Activated CD4-positive, alpha-beta memory T cell treated with anti-CD3 and anti-CD28 coated beads for 36 hours (primary cell): ENCODE measurements at regions of chr6 and their contacts with region 1.

Region 1: DNA sequence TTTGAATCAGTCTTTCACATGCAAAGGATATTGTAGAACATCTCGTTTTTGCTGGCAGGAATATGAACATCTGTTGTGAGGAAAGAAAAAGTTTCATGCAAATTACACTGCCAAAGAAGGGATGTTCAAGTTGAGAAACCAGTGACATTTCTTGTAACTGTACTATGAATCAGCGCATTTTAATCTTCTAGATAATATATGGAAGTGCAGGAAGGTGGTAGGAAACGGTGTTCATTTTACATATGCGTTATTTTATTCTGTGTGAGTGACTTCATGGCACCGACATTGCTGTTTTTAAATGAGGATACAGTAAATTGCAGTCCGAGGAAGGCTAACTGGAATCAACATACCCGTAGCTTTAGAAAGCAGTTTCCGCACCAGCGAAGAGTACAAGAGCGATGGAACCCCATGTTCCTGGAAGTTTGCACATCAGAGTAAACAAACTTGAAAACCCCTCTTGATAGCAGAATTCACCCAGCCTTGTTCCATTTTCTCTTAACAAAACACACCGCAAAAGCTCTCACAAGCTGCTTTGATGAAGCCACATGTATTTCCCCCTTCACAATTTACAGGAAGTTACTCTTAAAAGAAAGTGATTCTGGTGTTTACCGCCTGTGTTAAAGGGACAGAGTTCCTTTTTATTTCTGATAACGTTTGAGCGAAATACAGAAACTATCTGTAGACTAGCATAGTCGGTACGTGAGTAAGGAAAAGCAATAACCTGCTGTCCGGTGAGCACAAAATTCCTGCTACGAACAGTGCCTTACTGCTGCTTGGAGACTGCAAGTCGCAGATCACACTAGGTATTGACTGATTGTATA is 11.5 kb downstream of the PRDM1 start:
- DNase-seq: peak; percentile 69
- H3K4me3 Mint-ChIP-seq: peak overlapping the region; percentile 91
- H3K27ac Mint-ChIP-seq: peak overlapping the region; percentile 96
- H3K4me1 Mint-ChIP-seq: peaks cover 77% of the 10 kb centered on the region
- H3K27me3 Mint-ChIP-seq: peaks cover 2% of the 10 kb centered on the region

Region 2: DNA sequence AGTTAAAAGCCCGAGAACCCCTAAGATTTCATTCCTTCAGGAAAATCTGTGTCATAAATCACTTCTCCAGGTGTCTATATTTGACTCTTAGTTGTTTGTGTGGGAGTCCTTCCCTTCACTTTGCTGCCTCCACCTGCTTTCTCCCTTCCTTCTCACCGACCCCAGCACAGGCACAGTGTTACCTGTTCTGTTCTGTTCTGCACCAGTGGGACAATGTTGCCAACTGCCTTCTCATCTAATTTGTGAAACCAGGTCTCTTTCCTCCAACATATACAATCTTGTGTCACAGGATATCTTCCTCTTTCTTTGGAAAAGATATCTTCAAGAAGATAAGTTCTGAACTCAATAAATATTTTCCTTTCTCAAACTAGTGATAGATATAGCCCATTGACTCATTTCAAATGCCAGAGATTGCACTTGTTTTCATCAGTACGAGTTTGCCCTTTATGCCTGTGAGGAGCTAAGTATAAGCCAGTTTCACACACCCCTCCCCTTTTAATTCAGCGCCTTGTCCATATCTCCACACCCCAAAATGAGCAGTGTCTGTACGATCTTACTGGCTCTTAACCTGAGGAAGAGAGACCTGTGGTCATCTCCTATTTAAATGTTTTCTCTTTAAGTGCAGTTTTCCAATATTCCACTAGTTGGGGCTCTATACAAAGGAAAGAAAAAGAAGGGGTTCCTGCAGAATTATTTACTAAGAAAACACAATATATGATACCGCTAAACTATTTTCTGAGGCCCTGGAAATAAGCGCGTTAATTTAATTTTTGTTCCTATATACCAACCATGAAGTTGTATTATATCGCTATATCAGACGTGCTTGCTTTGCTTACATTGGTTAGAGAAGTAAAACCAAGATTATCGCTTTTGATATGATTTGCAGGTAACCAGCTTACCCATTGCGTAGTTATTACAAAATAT is 613.1 kb before region 1 on chr6:
- CTCF ChIA-PET with region 1: no interaction called
- POLR2A ChIA-PET with region 1: interaction called, 3 read pairs
- intact Hi-C with region 1: loop called (anchors 5 kb)
- DNase-seq: no peak
- H3K4me3 Mint-ChIP-seq: peak overlapping the region; percentile 2
- H3K27ac Mint-ChIP-seq: peak overlapping the region; percentile 30
- H3K4me1 Mint-ChIP-seq: peaks cover 32% of the 10 kb centered on the region
- H3K27me3 Mint-ChIP-seq: peaks cover 7% of the 10 kb centered on the region

Region 3: GRCh38 chr6:105810105-105810921 is 287.3 kb before region 1 on chr6:
- CTCF ChIA-PET with region 1: no interaction called
- POLR2A ChIA-PET with region 1: interaction called, 4 read pairs
- intact Hi-C with region 1: loop called (anchors 1 kb)
- DNase-seq: peak; percentile 82
- H3K4me3 Mint-ChIP-seq: no peak overlapping the region
- H3K27ac Mint-ChIP-seq: peak overlapping the region; percentile 53
- H3K4me1 Mint-ChIP-seq: peaks cover 42% of the 10 kb centered on the region
- H3K27me3 Mint-ChIP-seq: peaks cover 10% of the 10 kb centered on the region

Region 4: DNA sequence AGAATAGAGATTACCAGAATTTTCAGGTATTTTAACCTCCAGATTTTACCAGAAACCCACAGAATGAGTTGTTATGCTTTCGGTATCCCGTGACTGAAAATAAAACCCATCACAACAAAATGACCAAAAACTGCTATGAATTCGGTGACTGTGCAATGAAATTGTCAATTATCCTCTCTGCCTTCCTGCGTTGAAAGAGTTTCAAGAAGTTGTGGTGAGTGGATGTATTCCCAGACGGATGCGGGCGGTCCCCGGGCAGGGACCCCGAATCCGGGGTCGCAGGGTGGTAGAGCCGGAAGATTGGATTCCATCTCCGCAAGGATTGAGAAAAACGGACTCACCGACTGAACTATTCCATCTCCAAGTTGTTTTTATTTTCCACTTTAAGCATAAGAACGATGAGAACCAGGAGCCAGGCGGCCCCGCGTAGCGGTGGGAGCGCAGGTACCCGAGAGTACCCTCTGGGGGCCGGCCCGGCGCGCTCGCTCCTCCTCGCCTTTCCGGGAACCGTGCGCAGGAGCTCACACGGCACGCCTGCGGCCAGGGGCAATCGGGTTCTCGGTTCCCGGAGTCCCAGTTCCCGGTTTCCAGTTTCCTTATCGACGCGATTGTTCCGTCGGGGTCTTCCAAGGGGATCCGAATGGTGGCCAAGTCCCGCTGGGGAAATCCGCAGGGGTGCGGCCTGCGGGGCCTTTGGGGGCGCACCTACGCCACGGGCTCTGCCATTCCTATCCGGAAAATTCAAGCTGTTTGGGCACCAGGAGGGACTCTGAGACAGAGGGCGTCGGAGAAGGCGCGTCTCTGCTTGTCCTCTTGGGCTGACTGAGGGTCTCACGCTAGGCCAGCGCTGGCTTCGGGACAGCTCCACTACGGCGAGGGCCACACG is 116.4 kb before region 1 on chr6:
- CTCF ChIA-PET with region 1: interaction called, 3 read pairs
- POLR2A ChIA-PET with region 1: interaction called, 31 read pairs
- intact Hi-C with region 1: loop called (anchors 1 kb)
- DNase-seq: peak; percentile 60
- H3K4me3 Mint-ChIP-seq: peak overlapping the region; percentile 78
- H3K27ac Mint-ChIP-seq: peak overlapping the region; percentile 93
- H3K4me1 Mint-ChIP-seq: peaks cover 53% of the 10 kb centered on the region
- H3K27me3 Mint-ChIP-seq: peaks cover 32% of the 10 kb centered on the region

Region 5: DNA sequence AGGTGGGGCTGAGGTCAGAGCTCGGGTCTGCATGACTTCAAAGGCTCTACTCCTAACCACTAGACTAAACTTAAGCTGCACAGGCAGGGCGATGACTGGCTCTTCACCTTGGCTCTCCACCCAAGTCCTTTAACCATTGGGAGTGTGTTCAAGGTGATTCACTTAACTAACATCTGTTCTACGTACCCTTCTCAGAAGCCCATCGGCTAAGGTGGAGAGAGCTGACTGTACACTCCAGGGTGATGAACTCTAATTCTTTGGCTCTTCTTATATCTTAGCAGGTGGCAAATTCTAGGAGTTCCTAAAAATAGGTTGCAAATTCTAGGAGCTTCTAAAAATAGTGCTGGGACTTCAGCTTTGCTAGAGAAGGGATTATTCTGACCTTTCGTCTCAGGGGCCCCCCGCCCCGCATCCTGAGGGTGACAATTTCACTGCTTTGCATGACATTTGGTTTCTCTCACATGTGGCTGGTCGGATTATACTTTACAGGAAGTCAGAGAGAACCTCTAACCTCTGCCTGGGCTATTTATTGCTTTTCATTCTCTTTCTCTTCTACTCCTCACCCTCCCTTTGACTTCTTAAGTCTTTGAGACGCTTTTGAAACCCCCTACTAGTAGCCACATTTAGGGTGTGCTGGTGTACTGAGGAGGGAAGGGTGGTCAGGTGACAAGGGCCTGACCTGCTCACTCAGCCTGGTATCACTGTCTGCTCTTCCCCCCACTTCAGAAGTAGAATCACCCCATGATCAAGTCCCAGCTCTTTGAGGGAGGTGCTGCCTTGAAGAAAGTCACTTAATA is 44.0 kb after region 1 on chr6:
- CTCF ChIA-PET with region 1: no interaction called
- POLR2A ChIA-PET with region 1: interaction called, 3 read pairs
- intact Hi-C with region 1: loop called (anchors 1 kb)
- DNase-seq: peak; percentile 80
- H3K4me3 Mint-ChIP-seq: peak overlapping the region; percentile 10
- H3K27ac Mint-ChIP-seq: peak overlapping the region; percentile 83
- H3K4me1 Mint-ChIP-seq: peaks cover 49% of the 10 kb centered on the region
- H3K27me3 Mint-ChIP-seq: no peaks in the 10 kb centered on the region

Region 6: DNA sequence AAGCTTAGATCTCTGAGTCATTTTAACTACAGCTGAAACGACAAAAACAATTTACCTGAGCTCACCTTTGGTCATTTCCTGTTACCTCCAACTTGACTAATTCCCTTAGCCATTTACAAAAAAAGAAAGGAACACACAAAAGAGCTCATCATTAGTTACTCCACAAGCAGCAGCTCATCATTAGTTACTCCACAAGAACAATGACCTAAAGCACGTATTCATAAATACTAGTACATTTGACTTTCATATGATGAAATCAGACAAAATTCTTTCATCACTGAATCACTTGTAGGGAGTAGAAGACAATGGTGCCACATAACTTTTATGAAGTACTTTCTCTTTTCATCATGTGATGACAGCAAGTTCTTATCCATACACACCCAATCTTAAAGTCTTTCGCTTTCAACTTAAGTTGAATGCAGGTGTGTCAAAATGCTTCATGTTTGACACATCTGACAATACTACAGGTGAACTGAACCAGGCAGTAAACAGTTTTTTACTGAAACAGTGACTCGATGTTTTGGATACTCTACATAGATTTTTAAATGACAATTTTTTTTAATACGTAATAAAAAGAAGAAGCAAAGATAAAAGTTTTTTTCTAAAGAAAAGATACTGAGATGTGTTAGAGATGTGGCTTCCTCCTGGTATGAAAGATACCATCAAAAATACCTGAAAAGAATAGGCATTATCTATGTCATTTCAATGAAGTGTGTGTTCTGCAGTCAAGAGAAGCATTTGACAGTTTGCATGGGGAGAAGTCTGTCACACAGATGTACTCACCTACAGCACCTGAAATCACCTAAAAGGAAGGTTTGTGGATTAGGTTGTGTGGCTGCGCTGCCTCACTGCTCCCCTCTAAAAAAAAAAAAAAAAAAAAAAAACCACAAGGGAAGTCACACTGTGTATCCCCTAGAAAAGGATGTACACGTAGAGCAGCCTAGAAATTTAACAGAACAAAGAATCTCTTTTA is 97.6 kb after region 1 on chr6:
- CTCF ChIA-PET with region 1: no interaction called
- POLR2A ChIA-PET with region 1: no interaction called
- intact Hi-C with region 1: loop called (anchors 1 kb)
- DNase-seq: no peak
- H3K4me3 Mint-ChIP-seq: peak overlapping the region; percentile 43
- H3K27ac Mint-ChIP-seq: peak overlapping the region; percentile 81
- H3K4me1 Mint-ChIP-seq: peaks cover 54% of the 10 kb centered on the region
- H3K27me3 Mint-ChIP-seq: no peaks in the 10 kb centered on the region

Region 7: DNA sequence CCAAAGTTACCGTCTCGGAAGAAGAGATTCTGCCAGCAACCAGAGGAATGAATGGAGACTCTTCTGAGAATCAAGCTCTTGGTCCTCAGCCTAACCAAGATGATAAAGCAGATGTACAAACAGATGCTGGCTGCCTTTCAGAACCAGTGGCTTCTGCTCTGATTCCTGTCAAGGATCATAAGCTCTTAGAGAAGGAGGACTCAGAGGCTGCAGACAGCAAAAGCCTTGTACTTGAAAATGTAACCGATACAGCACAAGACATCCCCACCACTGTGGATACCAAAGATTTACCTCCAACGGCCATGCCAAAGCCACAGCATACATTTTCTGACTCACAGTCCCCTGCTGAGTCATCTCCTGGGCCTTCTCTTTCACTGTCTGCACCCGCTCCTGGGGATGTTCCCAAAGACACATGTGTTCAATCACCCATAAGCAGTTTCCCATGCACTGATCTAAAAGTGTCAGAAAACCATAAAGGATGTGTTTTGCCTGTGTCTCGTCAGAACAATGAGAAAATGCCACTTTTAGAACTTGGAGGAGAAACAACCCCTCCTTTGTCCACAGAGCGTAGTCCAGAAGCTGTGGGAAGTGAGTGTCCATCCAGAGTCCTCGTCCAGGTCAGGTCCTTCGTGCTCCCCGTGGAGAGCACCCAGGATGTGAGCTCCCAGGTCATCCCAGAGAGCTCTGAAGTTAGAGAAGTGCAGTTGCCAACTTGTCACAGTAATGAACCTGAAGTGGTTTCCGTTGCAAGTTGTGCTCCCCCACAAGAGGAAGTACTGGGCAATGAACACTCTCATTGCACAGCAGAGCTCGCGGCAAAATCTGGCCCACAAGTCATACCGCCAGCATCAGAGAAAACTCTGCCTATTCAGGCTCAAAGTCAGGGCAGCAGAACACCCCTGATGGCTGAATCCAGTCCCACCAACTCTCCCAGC is 422.1 kb after region 1 on chr6:
- CTCF ChIA-PET with region 1: no interaction called
- POLR2A ChIA-PET with region 1: interaction called, 6 read pairs
- intact Hi-C with region 1: loop called (anchors 2 kb)
- DNase-seq: peak; percentile 92
- H3K4me3 Mint-ChIP-seq: peak overlapping the region; percentile 76
- H3K27ac Mint-ChIP-seq: peak overlapping the region; percentile 99
- H3K4me1 Mint-ChIP-seq: peaks cover 67% of the 10 kb centered on the region
- H3K27me3 Mint-ChIP-seq: no peaks in the 10 kb centered on the region

Region 8: GRCh38 chr6:106591111-106591825 is 493.6 kb after region 1 on chr6:
- CTCF ChIA-PET with region 1: no interaction called
- POLR2A ChIA-PET with region 1: no interaction called
- intact Hi-C with region 1: no loop called
- DNase-seq: no peak
- H3K4me3 Mint-ChIP-seq: no peak overlapping the region
- H3K27ac Mint-ChIP-seq: no peak overlapping the region
- H3K4me1 Mint-ChIP-seq: no peaks in the 10 kb centered on the region
- H3K27me3 Mint-ChIP-seq: no peaks in the 10 kb centered on the region